ENCODE measurements at regions of chr7 and their contacts with region 1.

Region 1: GRCh38 chr7:153193144-153193595 is 433.6 kb downstream of the ACTR3B start:
- DNase-seq: no peak
- ATAC-seq: peak in 3 of 4 donors; percentile 43 to 62 (median 56)
- H3K4me3 ChIP-seq: no peak overlapping the region
- H3K27ac ChIP-seq: no peak overlapping the region
- H3K4me1 ChIP-seq: no peaks in the 10 kb centered on the region
- H3K27me3 ChIP-seq: peaks cover 0 to 3% (median 0%) of the 10 kb centered on the region in 9 donors
- CTCF ChIP-seq: peak; percentile 32 to 56 (median 46)
- POLR2A ChIP-seq: no peak

Region 2: DNA sequence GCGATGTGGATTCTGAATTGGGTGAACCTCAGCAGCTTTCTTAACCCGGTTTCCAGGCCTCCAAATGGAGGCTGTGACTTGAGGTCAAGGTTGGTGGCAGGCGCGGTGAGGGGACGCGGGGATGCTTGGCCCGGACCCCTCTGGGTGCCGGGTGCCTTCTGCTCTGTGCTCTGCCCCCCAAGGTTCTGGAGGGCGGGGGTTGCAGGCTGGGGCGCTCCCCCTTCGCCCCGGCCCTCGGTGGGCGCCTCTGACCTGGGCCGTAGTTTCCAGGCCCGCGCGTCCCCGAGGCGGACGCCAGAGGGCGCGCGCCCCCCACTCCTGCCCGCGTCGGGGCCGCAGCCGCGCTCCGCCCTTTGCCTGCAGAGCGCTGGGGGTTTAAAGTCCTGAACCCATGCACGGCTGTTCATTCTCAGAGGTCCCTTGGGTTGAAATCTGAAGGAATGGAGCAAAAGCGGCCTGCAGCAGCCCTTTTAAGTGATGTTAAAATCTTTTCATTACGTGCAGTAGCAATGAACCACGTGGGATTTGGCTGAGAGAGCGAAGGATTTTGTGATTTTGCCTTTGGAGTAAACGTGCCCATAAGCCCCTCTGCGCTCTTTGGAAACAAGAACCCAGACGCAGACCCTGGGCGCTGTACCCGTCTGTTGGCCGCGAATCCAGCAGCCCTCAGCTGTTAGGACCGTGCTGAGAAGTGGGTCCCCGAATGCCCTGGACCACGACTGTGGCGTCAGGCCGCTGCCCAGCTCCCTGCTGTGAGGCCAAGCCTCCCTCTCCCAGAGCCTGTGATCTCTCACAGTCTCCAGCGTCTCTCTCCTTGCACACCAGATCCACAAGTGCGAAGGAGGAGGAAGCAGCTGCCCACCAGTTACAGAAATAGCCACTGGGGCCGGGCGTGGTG is 298.6 kb before region 1 on chr7:
- intact Hi-C with region 1: loop called in 2 of 10 experiments (anchors 5 to 10 kb)
- DNase-seq: no peak
- ATAC-seq: peak in 2 of 4 donors; percentile 57 to 70
- H3K4me3 ChIP-seq: no peak overlapping the region
- H3K27ac ChIP-seq: no peak overlapping the region
- H3K4me1 ChIP-seq: peaks cover 0 to 7% (median 0%) of the 10 kb centered on the region in 12 donors
- H3K27me3 ChIP-seq: peaks cover 0 to 18% (median 0%) of the 10 kb centered on the region in 9 donors
- CTCF ChIP-seq: peak; percentile 62 to 86 (median 72)
- POLR2A ChIP-seq: no peak

Region 3: DNA sequence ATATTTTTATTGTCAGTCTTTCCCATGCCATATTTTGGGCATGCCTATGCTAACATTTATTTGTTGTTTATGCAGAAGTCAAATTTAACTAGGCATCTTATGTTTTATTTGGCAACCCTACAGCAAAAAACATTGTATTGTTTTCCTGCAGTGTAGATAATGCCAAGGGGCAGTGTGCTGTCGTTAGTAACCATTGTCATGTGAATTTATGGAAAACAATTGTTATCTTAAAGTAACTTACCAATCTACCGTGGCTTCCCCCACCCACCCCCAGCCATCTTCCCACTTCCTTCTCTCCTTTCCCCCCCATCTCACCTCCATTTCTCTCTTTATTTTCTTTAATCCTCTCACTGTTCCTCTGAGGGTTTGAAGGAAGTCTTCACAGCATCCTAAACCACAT is 63.1 kb before region 1 on chr7:
- intact Hi-C with region 1: loop called in 1 of 10 experiments (anchors 10 kb)
- DNase-seq: no peak
- ATAC-seq: no peak
- H3K4me3 ChIP-seq: no peak overlapping the region
- H3K27ac ChIP-seq: no peak overlapping the region
- H3K4me1 ChIP-seq: no peaks in the 10 kb centered on the region
- H3K27me3 ChIP-seq: no peaks in the 10 kb centered on the region
- CTCF ChIP-seq: no peak
- POLR2A ChIP-seq: no peak

Region 4: GRCh38 chr7:153835104-153835503 is 641.9 kb after region 1 on chr7:
- intact Hi-C with region 1: loop called in 1 of 10 experiments (anchors 10 kb)
- DNase-seq: no peak
- ATAC-seq: no peak
- H3K4me3 ChIP-seq: no peak overlapping the region
- H3K27ac ChIP-seq: no peak overlapping the region
- H3K4me1 ChIP-seq: no peaks in the 10 kb centered on the region
- H3K27me3 ChIP-seq: no peaks in the 10 kb centered on the region
- CTCF ChIP-seq: peak in 1 of 12 donors; percentile 7
- POLR2A ChIP-seq: no peak

Measured in heart left ventricle (tissue), 16 donors.